ENCODE measurements at regions of chr14 and their contacts with region 1.

Region 1: GRCh38 chr14:71415404-71415690 is 508.1 kb downstream of the PCNX1 start:
- DNase-seq: no peak
- ATAC-seq: no peak
- H3K4me3 Mint-ChIP-seq: no peak overlapping the region
- H3K27ac Mint-ChIP-seq: no peak overlapping the region
- H3K4me1 Mint-ChIP-seq: peaks cover 35% of the 10 kb centered on the region
- H3K27me3 Mint-ChIP-seq: no peaks in the 10 kb centered on the region
- CTCF ChIP-seq: no peak

Region 2: DNA sequence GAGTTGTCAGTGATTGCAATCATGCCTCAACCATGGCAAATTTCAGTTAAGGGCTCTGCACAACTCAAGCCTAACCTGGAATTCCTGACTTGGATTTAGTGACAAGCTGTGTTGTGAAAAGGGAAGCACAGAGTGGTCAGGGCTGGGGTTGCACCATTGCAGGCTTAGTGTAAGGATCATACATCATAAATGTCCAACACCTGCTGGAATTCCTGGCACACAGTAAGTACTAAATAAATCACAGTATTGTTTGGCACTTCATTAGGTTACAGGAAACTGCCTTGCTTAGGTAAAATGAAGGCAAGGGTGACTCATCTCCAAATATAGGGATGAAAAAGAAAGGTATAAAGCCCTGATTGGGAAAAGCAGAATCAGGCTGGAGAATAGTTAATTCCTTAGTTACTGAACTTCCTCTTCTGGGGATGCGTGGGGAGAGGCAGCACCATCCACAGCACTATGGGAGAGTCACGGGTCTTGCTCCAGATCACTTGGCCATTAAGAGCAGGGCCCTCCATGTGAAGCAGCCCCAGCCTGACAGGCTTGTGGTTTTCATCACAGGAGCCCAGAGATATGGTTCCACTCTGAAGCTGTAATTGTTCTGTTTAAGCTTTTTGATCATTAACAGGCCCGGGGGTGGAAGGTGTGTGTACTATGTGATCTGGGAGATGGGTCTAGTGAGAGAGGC is 1266.3 kb before region 1 on chr14:
- CTCF ChIA-PET with region 1: no interaction called
- POLR2A ChIA-PET with region 1: no interaction called
- intact Hi-C with region 1: no loop called
- DNase-seq: no peak
- ATAC-seq: no peak
- H3K4me3 Mint-ChIP-seq: no peak overlapping the region
- H3K27ac Mint-ChIP-seq: no peak overlapping the region
- H3K4me1 Mint-ChIP-seq: no peaks in the 10 kb centered on the region
- H3K27me3 Mint-ChIP-seq: no peaks in the 10 kb centered on the region
- CTCF ChIP-seq: no peak

Region 3: DNA sequence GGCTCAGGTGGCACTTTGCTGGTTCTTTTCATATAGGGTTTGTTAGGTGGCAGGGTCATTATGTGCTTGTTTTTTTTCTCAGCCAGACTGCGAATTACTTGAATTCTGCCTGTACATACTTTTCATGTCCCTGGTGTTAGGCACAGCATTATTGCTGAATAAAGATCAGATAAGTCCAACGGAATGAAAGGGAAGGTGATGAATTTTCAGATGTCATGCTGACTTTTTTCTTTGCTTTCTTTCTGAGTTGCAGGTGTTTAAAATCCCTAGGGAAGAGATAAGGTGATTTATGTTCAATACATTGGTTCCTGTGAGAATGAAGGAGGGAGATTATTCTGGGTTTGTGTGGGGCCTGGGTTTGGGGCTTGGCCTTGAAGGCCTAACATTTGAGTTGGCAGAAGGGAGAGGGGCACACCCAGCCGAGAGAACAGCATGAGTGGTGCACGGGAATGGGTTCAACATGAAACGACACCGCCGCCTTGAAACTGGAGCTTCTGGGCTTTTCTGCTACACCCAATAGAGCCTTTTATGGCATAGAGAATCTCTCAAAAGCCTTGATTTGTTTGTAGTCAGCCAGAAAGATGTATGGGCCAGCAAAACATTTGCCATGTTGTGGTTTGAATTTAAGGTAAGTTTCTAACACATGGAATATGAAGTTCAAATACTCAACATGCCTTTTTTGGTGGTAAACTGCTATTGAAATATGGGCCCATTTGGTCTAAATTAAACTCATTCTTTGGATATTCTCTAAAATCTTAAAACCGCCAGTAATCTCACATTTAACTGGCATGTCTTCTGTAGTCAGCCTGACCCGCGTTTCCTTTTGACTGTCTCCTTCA is 31.1 kb before region 1 on chr14:
- CTCF ChIA-PET with region 1: no interaction called
- POLR2A ChIA-PET with region 1: no interaction called
- intact Hi-C with region 1: no loop called
- DNase-seq: no peak
- ATAC-seq: no peak
- H3K4me3 Mint-ChIP-seq: no peak overlapping the region
- H3K27ac Mint-ChIP-seq: peak overlapping the region; percentile 47
- H3K4me1 Mint-ChIP-seq: peaks cover 79% of the 10 kb centered on the region
- H3K27me3 Mint-ChIP-seq: no peaks in the 10 kb centered on the region
- CTCF ChIP-seq: no peak

Region 4: GRCh38 chr14:71430321-71431208 is 15.2 kb after region 1 on chr14:
- CTCF ChIA-PET with region 1: no interaction called
- POLR2A ChIA-PET with region 1: no interaction called
- intact Hi-C with region 1: loop called (anchors 2 kb)
- DNase-seq: no peak
- ATAC-seq: no peak
- H3K4me3 Mint-ChIP-seq: no peak overlapping the region
- H3K27ac Mint-ChIP-seq: no peak overlapping the region
- H3K4me1 Mint-ChIP-seq: peaks cover 54% of the 10 kb centered on the region
- H3K27me3 Mint-ChIP-seq: no peaks in the 10 kb centered on the region
- CTCF ChIP-seq: no peak

Region 5: GRCh38 chr14:71566276-71566675 is 150.9 kb after region 1 on chr14:
- CTCF ChIA-PET with region 1: no interaction called
- POLR2A ChIA-PET with region 1: no interaction called
- intact Hi-C with region 1: no loop called
- DNase-seq: no peak
- ATAC-seq: peak; percentile 81
- H3K4me3 Mint-ChIP-seq: peak overlapping the region; percentile 59
- H3K27ac Mint-ChIP-seq: peak overlapping the region; percentile 51
- H3K4me1 Mint-ChIP-seq: peaks cover 30% of the 10 kb centered on the region
- H3K27me3 Mint-ChIP-seq: no peaks in the 10 kb centered on the region
- CTCF ChIP-seq: no peak

Measured in activated B cell treated with CpG ODN at 0.5 μM for 24 hours (primary cell).